ENCODE measurements at regions of chr5 and their contacts with region 1.

Region 1: GRCh38 chr5:139246394-139246793 is 47.1 kb upstream of the MATR3 start:
- DNase-seq: peak; percentile 72
- H3K4me3 Mint-ChIP-seq: peak overlapping the region; percentile 71
- H3K27ac Mint-ChIP-seq: peak overlapping the region; percentile 91
- H3K4me1 Mint-ChIP-seq: peaks cover 26% of the 10 kb centered on the region
- H3K27me3 Mint-ChIP-seq: peaks cover 5% of the 10 kb centered on the region

Region 2: DNA sequence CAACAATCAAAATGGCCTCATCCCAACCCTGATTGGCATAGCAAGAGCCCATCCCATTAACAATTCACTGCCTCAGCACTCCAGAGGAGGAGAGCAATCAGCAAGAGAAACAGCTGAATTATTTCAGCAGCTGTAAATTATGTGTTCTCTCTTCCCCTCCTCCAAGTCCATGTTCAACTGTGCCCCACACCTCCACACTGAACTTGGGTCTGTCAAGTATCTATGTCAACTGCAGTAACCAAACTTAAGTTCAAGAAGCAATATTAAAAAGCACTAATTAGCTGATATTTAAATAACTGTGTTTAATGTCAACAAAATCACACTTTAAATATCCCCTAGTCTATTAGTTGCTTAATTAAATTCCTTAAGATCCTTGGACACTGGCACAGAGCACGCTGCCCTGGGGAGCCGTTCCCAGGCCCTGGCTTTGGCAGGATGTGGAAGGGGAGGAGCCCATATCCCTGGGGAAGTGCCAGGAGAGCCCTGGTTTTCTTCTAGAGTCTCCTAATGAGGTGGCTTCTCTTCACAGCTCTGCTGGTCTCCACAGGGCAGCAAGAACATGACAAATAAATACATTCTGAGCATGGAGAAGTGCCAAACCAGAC is 98.8 kb before region 1 on chr5:
- intact Hi-C with region 1: loop called (anchors 5 kb)
- DNase-seq: no peak
- H3K4me3 Mint-ChIP-seq: no peak overlapping the region
- H3K27ac Mint-ChIP-seq: no peak overlapping the region
- H3K4me1 Mint-ChIP-seq: peaks cover 13% of the 10 kb centered on the region
- H3K27me3 Mint-ChIP-seq: no peaks in the 10 kb centered on the region